ENCODE measurements at regions of chr1 and their contacts with region 1.

Region 1: GRCh38 chr1:84781946-84782771 is 91.9 kb upstream of the SSX2IP start:
- DNase-seq: peak; percentile 72 to 80
- ATAC-seq: peak; percentile 97 to 99
- H3K4me3 ChIP-seq: peak overlapping the region; percentile 41
- H3K27ac ChIP-seq: peak overlapping the region; percentile 28 to 50; a peak in 1 of 6 replicates
- H3K4me1 ChIP-seq: no peaks in the 10 kb centered on the region
- CTCF ChIP-seq: peak; percentile 61
- EP300 ChIP-seq: no peak
- POLR2A ChIP-seq: no peak
- RAD21 ChIP-seq: peak; percentile 40 to 54; a peak in 4 of 5 replicates

Region 2: GRCh38 chr1:84689514-84690396 is 92.4 kb before region 1 on chr1:
- CTCF ChIA-PET with region 1: no interaction called
- POLR2A ChIA-PET with region 1: no interaction called
- DNase-seq: peak; percentile 18 to 39
- ATAC-seq: peak; percentile 78 to 81
- H3K4me3 ChIP-seq: peak overlapping the region; percentile 99
- H3K27ac ChIP-seq: peak overlapping the region; percentile 99 to 100
- H3K4me1 ChIP-seq: peaks cover 19% of the 10 kb centered on the region; the same call in 2 of the 3 replicates
- CTCF ChIP-seq: peak; percentile 26
- EP300 ChIP-seq: no peak
- POLR2A ChIP-seq: no peak
- RAD21 ChIP-seq: no peak

Region 3: GRCh38 chr1:84795966-84796600 is 13.9 kb after region 1 on chr1:
- CTCF ChIA-PET with region 1: interaction called, 11 read pairs
- POLR2A ChIA-PET with region 1: no interaction called
- DNase-seq: no peak
- ATAC-seq: no peak
- H3K4me3 ChIP-seq: no peak overlapping the region
- H3K27ac ChIP-seq: no peak overlapping the region
- H3K4me1 ChIP-seq: no peaks in the 10 kb centered on the region
- CTCF ChIP-seq: no peak
- EP300 ChIP-seq: no peak
- POLR2A ChIP-seq: no peak
- RAD21 ChIP-seq: no peak

Measured in A549 (cell line).